Left cardiac atrium (tissue), 4 donors: ENCODE measurements at regions of chr1 and their contacts with region 1.

Region 1: DNA sequence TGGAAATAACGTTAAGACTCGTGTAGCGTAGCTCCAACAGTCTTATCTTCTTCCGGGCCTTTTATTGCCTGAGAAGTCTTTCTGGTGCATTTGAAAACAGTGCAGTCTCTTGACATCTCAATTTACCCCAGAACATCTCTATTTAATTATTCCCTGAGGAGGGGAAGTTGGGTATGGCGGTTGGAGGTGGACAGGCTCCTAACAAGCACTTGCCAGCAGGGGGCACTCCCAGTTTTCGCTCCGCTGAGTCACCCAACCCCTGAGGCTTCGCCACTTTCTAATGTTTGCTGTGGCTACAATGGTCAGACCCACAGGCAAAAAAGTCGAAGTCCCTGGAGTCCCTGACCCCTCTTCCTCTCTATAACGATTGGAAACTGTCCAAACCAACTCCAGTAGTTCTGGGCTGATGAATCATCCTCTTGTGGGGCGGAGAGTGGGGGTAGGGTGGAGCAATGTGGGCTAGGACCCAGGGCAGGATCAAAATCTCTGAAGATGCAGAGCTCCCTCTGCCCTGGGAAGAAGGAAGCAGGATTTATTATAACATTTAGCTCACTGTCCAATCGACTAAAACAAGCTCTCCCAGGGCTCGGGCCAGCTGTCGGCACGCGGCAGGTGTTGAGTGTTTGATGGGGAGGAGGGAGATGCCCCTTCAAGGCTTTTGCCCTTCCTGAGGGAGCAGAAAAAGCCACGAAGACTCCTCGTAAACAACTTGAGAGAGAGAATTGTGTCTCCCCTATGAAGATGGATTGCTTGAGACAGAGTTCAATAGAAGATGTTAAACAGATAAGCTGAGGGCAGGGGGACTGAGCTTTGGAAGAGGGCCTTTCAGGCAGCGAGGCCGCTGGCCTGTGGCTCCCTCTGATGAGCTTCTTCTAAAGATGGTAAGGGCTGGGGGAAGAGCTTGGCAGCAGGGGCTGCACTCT is 85.7 kb downstream of the BRINP2 start:
- DNase-seq: peak; percentile 65
- ATAC-seq: peak; percentile 90 to 93

Region 2: DNA sequence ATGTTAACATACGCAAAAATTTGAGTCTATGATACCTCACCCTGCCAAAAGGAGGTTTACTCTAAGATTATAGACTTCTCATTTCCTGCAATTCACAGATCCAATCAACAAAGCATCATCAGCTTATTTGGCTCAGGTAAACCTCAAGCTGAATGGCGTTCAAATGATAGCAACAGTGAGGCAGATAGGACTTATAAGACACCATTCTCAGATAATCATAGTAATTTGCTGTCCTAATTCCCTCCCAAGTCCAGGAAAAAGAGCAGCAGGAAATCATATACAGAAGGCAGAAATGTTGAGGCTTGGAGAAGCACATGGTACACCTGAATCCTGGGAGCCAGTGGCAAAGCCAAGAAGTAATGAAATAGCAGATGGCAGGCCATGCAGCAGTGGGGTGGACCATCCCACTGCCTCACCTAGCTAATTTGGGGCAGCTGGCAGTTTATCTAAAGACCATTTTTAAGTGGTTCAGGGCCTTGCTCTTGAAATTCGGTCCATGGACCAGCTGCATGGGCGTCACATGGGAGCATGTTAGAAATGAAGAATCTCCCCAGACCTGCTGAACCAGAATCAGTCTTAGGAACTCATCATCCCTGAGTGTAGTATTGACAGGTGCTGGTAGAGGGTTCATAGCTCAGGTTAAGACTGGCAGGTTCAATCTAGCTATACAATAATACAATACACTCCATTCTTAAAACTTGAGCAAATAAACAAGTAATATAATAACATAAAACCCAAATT is 149.6 kb before region 1 on chr1:
- intact Hi-C with region 1: no loop called
- DNase-seq: no peak
- ATAC-seq: no peak

Region 3: GRCh38 chr1:177355595-177355994 is 99.2 kb after region 1 on chr1:
- intact Hi-C with region 1: loop called (anchors 10 kb)
- DNase-seq: no peak
- ATAC-seq: peak in 1 of 2 donors; percentile 54

Region 4: GRCh38 chr1:177873238-177873637 is 616.8 kb after region 1 on chr1:
- intact Hi-C with region 1: no loop called
- DNase-seq: no peak
- ATAC-seq: peak in 1 of 2 donors; percentile 91

Region 5: DNA sequence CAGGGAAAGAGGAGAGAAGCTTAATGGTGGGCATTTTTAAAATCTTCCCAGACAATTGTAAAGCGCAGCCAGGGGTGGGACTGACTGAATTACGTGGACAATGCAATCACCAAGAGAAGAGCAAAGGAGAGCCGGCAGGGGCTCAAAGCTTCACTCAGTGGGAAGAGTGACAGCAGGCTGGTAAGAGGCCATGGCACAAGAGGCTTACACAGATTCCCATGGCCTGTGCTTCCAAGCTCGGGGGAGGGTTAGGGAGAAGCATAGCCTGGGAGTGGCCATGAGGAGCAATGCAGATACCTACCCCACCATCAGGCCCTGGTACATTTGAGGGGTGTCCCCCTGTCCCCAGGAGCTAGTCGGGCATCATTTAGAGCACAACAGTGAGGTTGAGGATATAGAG is 740.5 kb after region 1 on chr1:
- intact Hi-C with region 1: no loop called
- DNase-seq: no peak
- ATAC-seq: peak in 1 of 2 donors; percentile 64